Heart left ventricle (tissue), 16 donors: ENCODE measurements at regions of chr10 and their contacts with region 1.

Region 1: GRCh38 chr10:95561182-95562075 is at the start of gene SORBS1:
- DNase-seq: peak; percentile 97 to 98 (median 97)
- ATAC-seq: peak; percentile 97 to 99 (median 98)
- H3K4me3 ChIP-seq: peak within 1 kb of the TSS; percentile 82 to 99 (median 94)
- H3K27ac ChIP-seq: peak within 1 kb of the TSS; percentile 81 to 96 (median 90)
- H3K4me1 ChIP-seq: peaks cover 0 to 49% (median 25%) of the 10 kb centered on the region in 12 donors
- H3K27me3 ChIP-seq: no peaks in the 10 kb centered on the region
- CTCF ChIP-seq: peak in 1 of 12 donors; percentile 8
- POLR2A ChIP-seq: peak; percentile 99 to 100
- total RNA-seq, gene SORBS1: 380 to 1,440 (median 1,065) TPM

Region 2: GRCh38 chr10:95333997-95334804 is 227.2 kb before region 1 on chr10:
- intact Hi-C with region 1: no loop called
- DNase-seq: peak; percentile 80 to 91 (median 89)
- ATAC-seq: peak; percentile 81 to 94 (median 87)
- H3K4me3 ChIP-seq: peak overlapping the region in 1 of 12 donors; percentile 3
- H3K27ac ChIP-seq: peak overlapping the region; percentile 80 to 96 (median 92)
- H3K4me1 ChIP-seq: peaks cover 8 to 85% (median 38%) of the 10 kb centered on the region in 12 donors
- H3K27me3 ChIP-seq: no peaks in the 10 kb centered on the region
- CTCF ChIP-seq: no peak
- POLR2A ChIP-seq: peak in 1 of 2 donors; percentile 26

Region 3: DNA sequence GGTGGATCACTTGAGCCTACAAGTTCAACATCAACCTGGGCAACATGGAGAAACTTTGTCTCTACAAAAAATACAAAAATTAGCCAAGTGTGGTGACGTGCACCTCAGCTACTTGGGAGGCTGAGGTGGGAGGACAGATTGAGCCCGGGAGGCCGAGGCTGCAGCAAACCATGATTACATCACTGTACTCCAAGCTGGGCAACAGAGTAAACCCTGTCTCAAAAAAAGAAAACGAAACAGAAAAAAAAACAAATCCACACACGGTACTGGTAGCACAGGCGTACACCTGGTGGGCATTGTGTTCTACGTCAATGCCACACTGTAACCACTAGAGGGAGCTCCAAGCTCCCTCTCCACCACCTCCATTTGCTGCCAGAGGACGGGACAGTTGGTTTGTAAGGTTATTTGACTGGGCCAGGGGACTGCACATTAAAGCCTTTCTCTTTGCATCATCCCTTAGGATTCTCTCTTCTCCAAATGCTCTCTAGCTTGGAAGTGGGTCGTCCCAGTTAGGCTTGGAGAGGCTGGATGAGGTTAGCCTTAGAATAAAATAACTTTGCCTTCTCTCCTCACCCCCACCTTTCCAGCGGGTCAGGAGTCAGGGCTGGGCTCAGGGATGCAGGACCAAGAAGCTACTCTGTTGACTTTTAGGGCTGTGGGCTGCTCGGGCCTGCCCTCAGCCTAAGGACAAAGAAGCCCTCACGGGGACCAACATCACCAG is 131.0 kb before region 1 on chr10:
- intact Hi-C with region 1: loop called (anchors 2 to 10 kb)
- DNase-seq: peak in 3 of 5 donors; percentile 60 to 66 (median 61)
- ATAC-seq: peak; percentile 34 to 75 (median 69)
- H3K4me3 ChIP-seq: no peak overlapping the region
- H3K27ac ChIP-seq: peak overlapping the region in 10 of 12 donors; percentile 33 to 91 (median 81)
- H3K4me1 ChIP-seq: peaks cover 16 to 99% (median 84%) of the 10 kb centered on the region in 12 donors
- H3K27me3 ChIP-seq: no peaks in the 10 kb centered on the region
- CTCF ChIP-seq: peak; percentile 94 to 99 (median 98)
- POLR2A ChIP-seq: no peak

Region 4: DNA sequence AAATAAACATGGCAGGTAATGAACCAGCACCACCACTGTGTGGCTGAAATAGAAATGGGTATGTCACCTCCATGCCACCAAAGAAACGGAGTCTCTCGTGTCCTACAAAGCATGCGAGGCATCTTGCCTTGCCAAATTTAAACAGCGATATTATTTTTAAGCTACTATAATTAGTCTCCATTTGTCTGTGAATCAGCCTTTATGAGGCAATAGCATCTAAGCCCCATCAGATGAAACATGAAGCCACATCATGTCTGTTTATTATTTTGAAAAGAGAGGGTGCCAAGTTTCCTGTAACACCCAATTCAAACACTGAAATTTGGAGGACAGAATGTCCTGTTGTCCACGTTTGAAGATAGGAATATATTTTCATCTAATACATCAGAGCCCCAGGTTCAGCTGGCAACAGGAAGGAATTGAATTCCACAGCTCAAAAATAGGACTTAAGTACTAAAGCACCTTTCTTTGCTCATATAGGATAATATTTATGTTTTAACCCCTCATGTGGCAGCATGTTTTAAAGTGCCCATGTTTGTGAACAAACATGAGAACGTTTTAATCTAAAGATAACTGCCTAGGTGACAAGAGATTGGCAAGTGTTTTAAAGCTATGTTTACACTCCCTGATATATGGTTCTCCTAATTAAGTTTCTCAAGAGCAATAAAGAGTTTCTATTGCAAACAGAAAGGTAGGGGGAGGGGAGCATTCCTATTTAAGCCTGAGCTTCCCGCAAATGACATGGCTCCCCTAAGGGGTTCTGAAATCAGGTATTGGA is 87.0 kb before region 1 on chr10:
- intact Hi-C with region 1: loop called in 2 of 10 experiments (anchors 2 to 5 kb)
- DNase-seq: peak in 4 of 5 donors; percentile 40 to 57 (median 49)
- ATAC-seq: peak; percentile 74 to 82 (median 79)
- H3K4me3 ChIP-seq: peak overlapping the region in 1 of 12 donors; percentile 6
- H3K27ac ChIP-seq: peak overlapping the region; percentile 81 to 98 (median 92)
- H3K4me1 ChIP-seq: peaks cover 10 to 97% (median 67%) of the 10 kb centered on the region in 12 donors
- H3K27me3 ChIP-seq: no peaks in the 10 kb centered on the region
- CTCF ChIP-seq: peak in 4 of 12 donors; percentile 14 to 34 (median 24)
- POLR2A ChIP-seq: peak in 1 of 2 donors; percentile 28

Region 5: DNA sequence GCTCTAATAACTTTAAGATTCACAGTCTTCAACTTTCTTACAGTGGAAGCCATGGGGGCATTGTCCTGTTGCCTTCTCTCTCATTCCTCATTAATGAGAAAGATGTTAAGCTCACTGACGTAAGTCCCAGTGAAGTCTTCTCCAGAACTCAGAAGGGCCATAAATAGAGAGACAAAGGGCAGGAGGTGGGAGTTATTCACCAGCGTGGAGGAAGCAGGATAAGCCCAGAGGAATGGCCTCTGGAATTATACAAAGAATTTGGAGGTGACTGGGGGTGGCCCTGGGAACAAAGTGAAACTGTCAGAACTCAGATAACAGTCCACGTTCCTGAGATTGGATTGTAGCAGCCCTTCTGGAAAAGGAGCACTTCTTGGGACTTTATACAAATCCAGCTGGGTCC is 52.7 kb before region 1 on chr10:
- intact Hi-C with region 1: loop called in 4 of 10 experiments (anchors 2 to 10 kb)
- DNase-seq: peak in 3 of 5 donors; percentile 39 to 53 (median 45)
- ATAC-seq: peak; percentile 59 to 86 (median 80)
- H3K4me3 ChIP-seq: peak overlapping the region in 7 of 12 donors; percentile 3 to 21 (median 8)
- H3K27ac ChIP-seq: peak overlapping the region; percentile 73 to 92 (median 85)
- H3K4me1 ChIP-seq: peaks cover 10 to 99% (median 69%) of the 10 kb centered on the region in 12 donors
- H3K27me3 ChIP-seq: no peaks in the 10 kb centered on the region
- CTCF ChIP-seq: no peak
- POLR2A ChIP-seq: no peak

Region 6: DNA sequence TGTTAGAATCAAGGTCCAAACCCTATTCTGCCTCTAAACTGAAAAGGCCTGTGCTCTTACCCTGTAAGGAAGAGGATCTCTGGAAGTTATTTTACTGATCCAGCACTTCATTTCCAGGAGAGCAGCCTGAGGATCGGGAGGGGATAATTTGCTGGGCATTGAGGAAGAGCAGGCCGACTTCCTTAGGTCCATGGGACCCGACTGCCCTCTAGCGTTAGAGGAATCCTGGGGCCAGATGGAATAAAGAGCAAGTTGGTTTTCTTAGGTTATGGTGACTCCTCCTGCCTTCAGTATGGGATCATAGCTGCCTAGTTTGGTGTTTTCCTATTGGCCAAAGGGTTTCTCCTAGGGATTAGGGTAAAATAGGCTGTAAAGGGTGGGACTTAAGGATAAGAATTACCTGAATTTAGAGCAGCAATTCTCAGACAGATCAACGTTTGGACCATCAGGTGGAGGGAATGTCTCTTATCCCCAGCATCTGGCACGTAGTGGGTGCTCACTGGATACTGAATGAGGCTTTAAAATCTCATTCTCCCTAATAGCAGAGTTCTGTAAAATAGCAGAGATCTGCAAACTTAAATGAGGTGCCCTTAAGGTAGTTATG is 39.8 kb after region 1 on chr10:
- intact Hi-C with region 1: loop called in 2 of 10 experiments (anchors 5 kb)
- DNase-seq: peak; percentile 70 to 83 (median 79)
- ATAC-seq: peak; percentile 66 to 91 (median 86)
- H3K4me3 ChIP-seq: no peak overlapping the region
- H3K27ac ChIP-seq: peak overlapping the region in 5 of 12 donors; percentile 26 to 79 (median 48)
- H3K4me1 ChIP-seq: peaks cover 0 to 33% (median 12%) of the 10 kb centered on the region in 12 donors
- H3K27me3 ChIP-seq: no peaks in the 10 kb centered on the region
- CTCF ChIP-seq: peak; percentile 86 to 99 (median 96)
- POLR2A ChIP-seq: no peak